Naive thymus-derived CD4-positive, alpha-beta T cell (primary cell): ENCODE measurements at regions of chr4 and their contacts with region 1.

Region 1: DNA sequence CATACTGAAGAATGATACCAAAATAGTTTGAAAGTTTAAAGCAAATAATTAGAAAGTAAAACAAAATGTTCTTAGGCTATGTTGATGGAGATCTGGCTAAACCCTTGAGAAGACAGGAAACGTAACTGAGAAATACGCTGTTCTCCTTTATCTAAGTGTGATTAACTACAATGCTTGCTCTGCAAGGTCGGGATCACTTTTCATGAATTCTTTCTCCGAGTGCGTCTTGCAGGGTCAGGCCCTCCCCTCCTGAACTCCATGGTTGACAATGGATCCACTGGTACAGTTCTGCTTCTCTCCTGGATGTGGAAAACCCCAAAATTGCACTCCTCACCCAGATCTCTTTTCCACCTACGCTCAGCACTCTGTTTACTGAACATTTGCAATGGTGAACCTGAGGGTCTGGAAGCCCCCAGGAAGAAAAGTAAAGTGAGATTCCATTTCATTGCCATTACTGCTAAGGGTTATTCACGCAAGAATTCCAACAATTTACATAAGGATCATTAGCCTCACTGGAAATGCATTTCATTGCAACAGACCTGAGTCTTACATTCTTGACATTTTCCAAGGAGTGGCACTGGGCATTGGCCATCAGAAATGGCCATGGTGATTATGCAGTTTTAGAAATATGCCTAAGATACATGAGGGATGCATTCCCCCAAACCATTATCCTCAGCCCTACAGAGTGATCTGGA is 24.6 kb upstream of the WWC2 start:
- DNase-seq: no peak
- ATAC-seq: no peak
- H3K4me3 ChIP-seq: no peak overlapping the region
- H3K4me3 Mint-ChIP-seq: no peak overlapping the region
- H3K27ac ChIP-seq: no peak overlapping the region
- H3K27ac Mint-ChIP-seq: peak overlapping the region in 1 of 9 donors; percentile 18
- H3K4me1 ChIP-seq: no peaks in the 10 kb centered on the region
- H3K4me1 Mint-ChIP-seq: no peaks in the 10 kb centered on the region
- H3K27me3 ChIP-seq: no peaks in the 10 kb centered on the region
- H3K27me3 Mint-ChIP-seq: peaks cover 0 to 16% (median 5%) of the 10 kb centered on the region in 5 donors

Region 2: GRCh38 chr4:181143250-181143854 is 1931.1 kb before region 1 on chr4:
- CTCF ChIA-PET with region 1: no interaction called
- POLR2A ChIA-PET with region 1: no interaction called
- intact Hi-C with region 1: loop called in 1 of 2 experiments (anchors 2 kb)
- DNase-seq: peak; percentile 7 to 57 (median 41)
- ATAC-seq: peak; percentile 49
- H3K4me3 ChIP-seq: no peak overlapping the region
- H3K4me3 Mint-ChIP-seq: no peak overlapping the region
- H3K27ac ChIP-seq: no peak overlapping the region
- H3K27ac Mint-ChIP-seq: no peak overlapping the region
- H3K4me1 ChIP-seq: no peaks in the 10 kb centered on the region
- H3K4me1 Mint-ChIP-seq: no peaks in the 10 kb centered on the region
- H3K27me3 ChIP-seq: no peaks in the 10 kb centered on the region
- H3K27me3 Mint-ChIP-seq: peaks cover 0 to 8% (median 0%) of the 10 kb centered on the region in 5 donors

Region 3: DNA sequence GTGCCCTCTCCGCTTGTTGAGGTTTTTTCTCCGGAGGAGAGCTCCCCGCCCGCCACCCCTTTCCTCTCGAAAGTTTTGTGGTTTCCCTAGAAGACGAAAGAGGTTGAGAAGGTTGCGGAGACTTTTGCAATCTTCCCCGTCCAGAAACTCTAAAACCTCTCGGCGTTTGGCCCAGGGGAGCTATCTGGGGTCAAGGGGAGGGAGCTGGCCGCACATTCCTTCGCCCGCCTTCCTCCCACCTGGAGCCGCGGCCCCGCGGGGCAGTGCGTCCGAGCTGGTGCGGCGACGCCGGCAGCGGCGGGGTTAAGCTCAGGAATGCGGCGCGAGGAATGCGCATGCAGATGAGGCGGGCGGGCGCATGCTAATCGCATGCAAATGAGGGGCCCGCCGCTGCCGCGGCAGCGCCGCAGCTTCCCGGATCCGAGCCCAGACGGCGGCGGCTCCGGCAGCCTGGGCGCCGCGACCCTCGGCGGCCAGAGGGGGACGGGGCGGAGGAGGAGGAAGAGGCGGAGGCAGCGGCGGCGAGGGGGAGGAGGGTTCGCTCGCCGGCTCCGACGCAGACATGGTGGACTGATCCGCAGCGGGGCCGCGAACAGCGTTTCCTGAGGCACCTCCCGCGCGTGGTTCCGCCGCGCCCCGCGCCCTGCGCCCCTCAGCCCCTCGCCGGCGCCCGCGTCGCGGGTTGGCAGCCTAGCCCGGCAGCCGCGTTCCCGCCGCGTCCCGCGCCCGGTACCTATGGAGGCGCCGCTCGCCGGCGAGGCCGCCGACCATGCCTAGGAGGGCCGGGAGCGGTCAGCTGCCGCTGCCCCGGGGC is 24.5 kb after region 1 on chr4 and contains the start of gene WWC2:
- CTCF ChIA-PET with region 1: interaction called, 4 read pairs
- POLR2A ChIA-PET with region 1: no interaction called
- intact Hi-C with region 1: loop called in 1 of 2 experiments (anchors 1 kb)
- DNase-seq: peak; percentile 40 to 68 (median 62)
- ATAC-seq: peak; percentile 85
- H3K4me3 ChIP-seq: peak within 1 kb of the TSS; percentile 75
- H3K4me3 Mint-ChIP-seq: peak within 1 kb of the TSS; percentile 51 to 87 (median 83)
- H3K27ac ChIP-seq: peak within 1 kb of the TSS; percentile 48
- H3K27ac Mint-ChIP-seq: peak within 1 kb of the TSS in 3 of 9 donors; percentile 56 to 72 (median 68)
- H3K4me1 ChIP-seq: peaks cover 0 to 4% of the 10 kb centered on the region in 2 donors
- H3K4me1 Mint-ChIP-seq: peaks cover 3 to 53% (median 34%) of the 10 kb centered on the region in 7 donors
- H3K27me3 ChIP-seq: peaks cover 0 to 2% of the 10 kb centered on the region in 2 donors
- H3K27me3 Mint-ChIP-seq: peaks cover 0 to 61% (median 0%) of the 10 kb centered on the region in 5 donors
- total RNA-seq, gene WWC2: 0.07 to 13.8 (median 10.9) TPM

Region 4: DNA sequence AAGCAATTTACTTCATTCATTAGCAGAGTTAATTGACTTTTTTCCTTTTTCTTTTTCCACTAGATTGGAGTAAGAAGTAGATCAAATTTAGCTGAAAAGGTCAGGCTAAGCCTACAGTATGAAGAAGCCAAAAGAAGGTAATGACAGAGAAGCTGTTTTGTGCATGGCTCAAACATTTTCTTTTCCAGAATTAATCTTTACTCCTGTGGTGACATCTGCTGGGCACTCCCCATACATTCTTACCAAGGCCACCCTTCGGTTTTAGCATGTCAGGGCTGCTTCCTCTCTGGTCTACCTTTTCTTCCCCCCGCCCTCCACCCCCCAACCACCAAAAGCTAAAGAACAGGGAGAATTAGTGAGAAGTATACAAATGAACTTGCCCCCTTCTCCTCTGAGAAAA is 175.4 kb after region 1 on chr4:
- CTCF ChIA-PET with region 1: interaction called, 21 read pairs
- POLR2A ChIA-PET with region 1: no interaction called
- intact Hi-C with region 1: loop called in 1 of 2 experiments (anchors 1 kb)
- DNase-seq: peak in 4 of 9 donors; percentile 3 to 19 (median 18)
- ATAC-seq: peak; percentile 47
- H3K4me3 ChIP-seq: no peak overlapping the region
- H3K4me3 Mint-ChIP-seq: no peak overlapping the region
- H3K27ac ChIP-seq: no peak overlapping the region
- H3K27ac Mint-ChIP-seq: no peak overlapping the region
- H3K4me1 ChIP-seq: no peaks in the 10 kb centered on the region
- H3K4me1 Mint-ChIP-seq: no peaks in the 10 kb centered on the region
- H3K27me3 ChIP-seq: no peaks in the 10 kb centered on the region
- H3K27me3 Mint-ChIP-seq: peaks cover 0 to 5% (median 0%) of the 10 kb centered on the region in 5 donors

Region 5: GRCh38 chr4:183398227-183399125 is 324.0 kb after region 1 on chr4:
- CTCF ChIA-PET with region 1: no interaction called
- POLR2A ChIA-PET with region 1: no interaction called
- intact Hi-C with region 1: loop called (anchors 2 to 10 kb)
- DNase-seq: peak; percentile 32 to 70 (median 57)
- ATAC-seq: peak; percentile 88
- H3K4me3 ChIP-seq: peak overlapping the region; percentile 76
- H3K4me3 Mint-ChIP-seq: peak overlapping the region; percentile 86 to 93 (median 90)
- H3K27ac ChIP-seq: peak overlapping the region; percentile 34
- H3K27ac Mint-ChIP-seq: peak overlapping the region; percentile 65 to 95 (median 82)
- H3K4me1 ChIP-seq: peaks cover 0 to 6% of the 10 kb centered on the region in 2 donors
- H3K4me1 Mint-ChIP-seq: peaks cover 17 to 34% (median 28%) of the 10 kb centered on the region in 7 donors
- H3K27me3 ChIP-seq: no peaks in the 10 kb centered on the region
- H3K27me3 Mint-ChIP-seq: peaks cover 0 to 45% (median 0%) of the 10 kb centered on the region in 5 donors